ENCODE measurements at regions of chr6 and their contacts with region 1.

Region 1: DNA sequence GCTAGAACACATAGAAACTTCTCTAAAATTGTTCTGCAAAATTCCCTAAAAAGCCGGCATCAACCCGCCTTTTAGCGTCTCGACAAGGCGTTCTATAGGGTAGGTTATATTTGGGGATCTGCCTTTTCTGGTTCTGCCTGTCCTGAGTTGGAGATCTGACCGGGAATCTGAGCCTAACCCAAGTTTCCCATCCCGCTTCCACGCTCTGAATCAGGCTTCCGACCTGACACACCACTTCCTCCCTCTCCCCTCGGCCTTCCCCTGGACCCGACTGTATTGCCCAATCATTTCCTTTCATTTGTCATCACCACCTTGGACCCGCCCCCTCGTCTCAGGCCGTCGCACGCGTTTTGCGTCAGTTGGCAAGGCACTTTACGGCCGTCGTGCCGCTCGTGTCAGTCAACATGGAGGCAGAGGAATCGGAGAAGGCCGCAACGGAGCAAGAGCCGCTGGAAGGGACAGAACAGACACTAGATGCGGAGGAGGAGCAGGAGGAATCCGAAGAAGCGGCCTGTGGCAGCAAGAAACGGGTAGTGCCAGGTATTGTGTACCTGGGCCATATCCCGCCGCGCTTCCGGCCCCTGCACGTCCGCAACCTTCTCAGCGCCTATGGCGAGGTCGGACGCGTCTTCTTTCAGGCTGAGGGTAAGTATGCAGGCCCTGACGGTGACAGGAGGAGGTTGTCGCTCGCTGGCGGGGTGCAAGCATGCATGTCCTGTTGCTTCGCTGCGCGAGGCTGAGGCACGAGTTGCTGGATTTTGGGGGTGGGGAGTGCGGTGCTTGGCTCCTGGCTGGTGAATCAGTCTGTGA is at the start of gene ABT1:
- DNase-seq: peak; percentile 98
- H3K4me3 Mint-ChIP-seq: no peak within 1 kb of the TSS
- H3K27ac Mint-ChIP-seq: no peak within 1 kb of the TSS
- H3K4me1 Mint-ChIP-seq: peaks cover 9% of the 10 kb centered on the region
- H3K27me3 Mint-ChIP-seq: peaks cover 7% of the 10 kb centered on the region
- CTCF ChIP-seq: no peak
- total RNA-seq, gene ABT1: 18.8 and 20.9 TPM in 2 replicates

Region 2: GRCh38 chr6:26175428-26176181 is 421.2 kb before region 1 on chr6:
- CTCF ChIA-PET with region 1: no interaction called
- intact Hi-C with region 1: loop called (anchors 10 kb)
- DNase-seq: peak; percentile 72
- H3K4me3 Mint-ChIP-seq: peak overlapping the region; percentile 30
- H3K27ac Mint-ChIP-seq: peak overlapping the region; percentile 79
- H3K4me1 Mint-ChIP-seq: peaks cover 70% of the 10 kb centered on the region
- H3K27me3 Mint-ChIP-seq: no peaks in the 10 kb centered on the region
- CTCF ChIP-seq: peak; percentile 69

Region 3: GRCh38 chr6:26342106-26343004 is 254.4 kb before region 1 on chr6:
- CTCF ChIA-PET with region 1: interaction called, 25 read pairs
- intact Hi-C with region 1: loop called (anchors 1 kb)
- DNase-seq: no peak
- H3K4me3 Mint-ChIP-seq: peak overlapping the region; percentile 3
- H3K27ac Mint-ChIP-seq: no peak overlapping the region
- H3K4me1 Mint-ChIP-seq: no peaks in the 10 kb centered on the region
- H3K27me3 Mint-ChIP-seq: no peaks in the 10 kb centered on the region
- CTCF ChIP-seq: no peak

Region 4: GRCh38 chr6:26363882-26364701 is 232.7 kb before region 1 on chr6:
- CTCF ChIA-PET with region 1: no interaction called
- intact Hi-C with region 1: no loop called
- DNase-seq: no peak
- H3K4me3 Mint-ChIP-seq: no peak overlapping the region
- H3K27ac Mint-ChIP-seq: no peak overlapping the region
- H3K4me1 Mint-ChIP-seq: no peaks in the 10 kb centered on the region
- H3K27me3 Mint-ChIP-seq: no peaks in the 10 kb centered on the region
- CTCF ChIP-seq: no peak

Region 5: DNA sequence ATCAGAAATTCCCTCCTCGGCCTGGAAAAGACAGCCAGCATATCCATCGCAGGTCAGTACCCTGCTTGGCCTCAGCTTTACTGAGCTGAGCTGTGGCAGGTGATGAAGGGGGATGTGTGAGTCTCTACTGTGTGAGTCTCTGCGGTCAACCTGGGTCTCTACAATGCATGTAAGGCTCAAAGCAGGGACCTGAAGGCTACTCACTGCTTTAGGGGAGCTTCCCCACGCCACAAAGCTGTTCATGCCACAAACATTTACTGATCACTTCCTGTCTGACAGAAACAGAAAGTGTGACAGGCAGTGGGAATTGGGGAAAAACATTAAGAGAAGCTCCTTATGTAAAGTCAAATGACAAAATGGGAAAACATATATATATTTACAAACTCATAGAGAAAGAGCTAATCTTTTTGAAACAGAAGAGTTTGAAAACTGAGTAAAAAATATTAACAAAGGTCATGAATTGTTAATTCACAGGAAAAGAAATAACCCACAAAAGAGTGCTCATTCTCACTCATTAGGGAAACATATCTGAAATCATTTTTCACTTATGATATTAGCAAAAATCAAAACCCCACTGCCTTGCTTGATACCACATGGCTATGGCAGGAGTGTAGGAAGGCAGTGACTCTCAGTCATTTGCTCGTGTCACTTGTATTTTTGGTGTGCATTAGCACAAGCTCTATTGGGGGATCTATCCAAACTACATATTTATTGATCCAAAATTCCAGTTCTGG is 150.7 kb before region 1 on chr6:
- CTCF ChIA-PET with region 1: no interaction called
- intact Hi-C with region 1: no loop called
- DNase-seq: no peak
- H3K4me3 Mint-ChIP-seq: no peak overlapping the region
- H3K27ac Mint-ChIP-seq: no peak overlapping the region
- H3K4me1 Mint-ChIP-seq: no peaks in the 10 kb centered on the region
- H3K27me3 Mint-ChIP-seq: no peaks in the 10 kb centered on the region
- CTCF ChIP-seq: no peak

Region 6: DNA sequence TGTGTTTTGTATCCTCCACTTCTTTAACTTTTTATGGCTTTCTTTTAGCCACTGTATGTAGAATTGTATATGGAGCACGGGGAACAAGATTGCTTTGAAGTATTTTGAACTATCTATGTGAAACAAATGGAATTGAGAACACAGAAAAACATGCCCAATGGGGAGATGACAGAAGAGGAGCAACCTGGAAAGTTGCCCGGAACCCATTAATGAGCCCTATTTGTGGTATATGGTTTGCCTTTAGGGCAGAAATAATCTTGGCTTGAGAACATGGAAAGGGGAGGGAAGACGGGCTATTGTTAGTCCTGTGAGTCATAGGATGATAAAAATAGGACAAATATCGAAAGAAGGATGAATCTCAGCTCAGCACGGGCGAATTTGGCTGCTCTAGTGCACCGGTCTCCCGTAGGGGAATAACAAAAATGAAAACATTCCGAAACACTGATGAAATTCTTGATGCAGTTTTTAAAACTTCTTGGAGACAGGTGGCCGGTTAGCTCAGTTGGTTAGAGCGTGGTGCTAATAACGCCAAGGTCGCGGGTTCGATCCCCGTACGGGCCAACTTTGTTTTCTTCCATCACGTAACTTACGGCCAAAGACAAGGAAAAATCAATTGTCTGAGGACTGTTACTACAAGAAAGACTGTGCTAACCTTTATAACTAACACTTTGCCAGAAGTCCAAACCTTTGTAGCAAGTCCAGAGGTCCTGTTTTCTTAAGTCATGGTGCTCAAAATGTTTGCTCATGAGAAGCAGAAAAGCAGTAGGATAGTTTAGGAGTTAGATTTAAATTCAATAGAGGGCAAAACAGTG is 42.9 kb before region 1 on chr6:
- CTCF ChIA-PET with region 1: interaction called, 10 read pairs
- intact Hi-C with region 1: no loop called
- DNase-seq: peak; percentile 89
- H3K4me3 Mint-ChIP-seq: no peak overlapping the region
- H3K27ac Mint-ChIP-seq: no peak overlapping the region
- H3K4me1 Mint-ChIP-seq: peaks cover 33% of the 10 kb centered on the region
- H3K27me3 Mint-ChIP-seq: no peaks in the 10 kb centered on the region
- CTCF ChIP-seq: no peak

Region 7: DNA sequence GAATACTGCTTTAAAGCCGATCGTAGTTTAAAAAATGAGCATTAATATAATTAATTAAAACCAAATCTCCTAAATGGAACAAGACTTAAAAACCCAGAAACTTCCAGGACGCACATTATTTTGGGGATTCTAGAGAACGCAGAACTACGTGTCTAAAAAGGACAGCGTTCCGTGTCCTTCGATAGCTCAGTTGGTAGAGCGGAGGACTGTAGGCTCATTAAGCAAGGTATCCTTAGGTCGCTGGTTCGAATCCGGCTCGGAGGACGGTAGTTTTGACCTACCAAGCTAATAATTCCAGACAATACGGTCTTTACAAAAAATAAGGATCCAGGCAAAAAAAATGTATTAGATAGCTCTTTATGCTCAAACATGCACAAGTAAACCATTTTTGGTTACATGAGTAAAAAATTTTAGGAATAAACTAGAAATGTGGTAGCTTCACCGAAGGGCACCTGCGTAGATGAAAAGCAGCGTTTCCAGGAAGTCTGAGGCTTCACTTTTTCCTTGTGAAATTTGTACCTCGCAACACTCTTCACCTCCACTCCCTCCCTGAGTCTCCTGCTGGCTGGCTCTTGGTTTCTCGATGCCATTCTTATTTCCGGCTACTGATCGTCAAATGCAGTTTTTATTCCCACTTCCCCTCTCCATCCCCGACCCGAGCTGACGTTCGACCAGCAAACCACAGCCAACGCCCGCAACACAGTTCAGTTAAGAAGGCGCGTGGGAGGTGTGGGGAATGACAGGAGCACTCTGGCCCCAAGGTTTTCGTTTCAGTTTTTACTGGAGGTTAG is 19.7 kb before region 1 on chr6:
- CTCF ChIA-PET with region 1: interaction called, 33 read pairs
- intact Hi-C with region 1: loop called (anchors 1 kb)
- DNase-seq: peak; percentile 73
- H3K4me3 Mint-ChIP-seq: peak overlapping the region; percentile 74
- H3K27ac Mint-ChIP-seq: peak overlapping the region; percentile 98
- H3K4me1 Mint-ChIP-seq: peaks cover 14% of the 10 kb centered on the region
- H3K27me3 Mint-ChIP-seq: no peaks in the 10 kb centered on the region
- CTCF ChIP-seq: no peak